Breast epithelium (tissue), 4 donors: ENCODE measurements at regions of chr13 and their contacts with region 1.

Region 1: GRCh38 chr13:59915252-59915651 is 248.5 kb downstream of the DIAPH3 start:
- DNase-seq: no peak
- H3K4me3 ChIP-seq: no peak overlapping the region
- H3K27ac ChIP-seq: no peak overlapping the region
- H3K4me1 ChIP-seq: no peaks in the 10 kb centered on the region
- H3K27me3 ChIP-seq: no peaks in the 10 kb centered on the region
- CTCF ChIP-seq: no peak
- POLR2A ChIP-seq: no peak

Region 2: DNA sequence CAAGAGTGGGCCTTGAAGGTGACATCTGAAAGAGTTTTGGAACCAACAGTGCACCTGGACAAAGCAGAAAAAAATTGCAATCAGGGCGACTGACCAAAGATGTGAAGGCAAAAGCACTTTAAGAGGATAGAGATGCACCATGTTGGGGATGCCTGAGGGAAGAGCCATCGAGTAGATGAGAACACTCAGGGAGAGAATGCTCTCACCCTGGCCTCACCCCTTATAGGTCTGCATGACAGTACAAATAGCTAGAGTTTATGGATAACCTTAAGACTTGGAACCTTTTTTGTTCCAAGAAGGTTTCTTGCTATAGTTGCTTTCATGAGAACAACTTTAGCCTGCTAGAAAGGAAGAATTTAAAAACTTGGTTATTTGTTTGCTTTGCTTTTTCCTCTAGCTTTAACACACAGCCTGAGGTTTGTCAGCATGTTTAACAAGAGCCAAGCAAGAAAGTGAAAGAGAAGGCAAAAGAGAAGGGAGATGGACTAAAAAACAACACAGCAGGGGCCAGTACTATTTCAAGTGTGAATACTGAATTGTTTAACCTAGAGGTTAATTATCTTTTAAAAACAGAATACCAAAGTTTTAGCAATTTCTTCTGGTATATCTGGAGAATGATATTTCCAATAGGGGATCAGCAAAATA is 170.4 kb before region 1 on chr13:
- intact Hi-C with region 1: loop called (anchors 5 kb)
- DNase-seq: no peak
- H3K4me3 ChIP-seq: no peak overlapping the region
- H3K27ac ChIP-seq: no peak overlapping the region
- H3K4me1 ChIP-seq: no peaks in the 10 kb centered on the region
- H3K27me3 ChIP-seq: no peaks in the 10 kb centered on the region
- CTCF ChIP-seq: no peak
- POLR2A ChIP-seq: no peak